ENCODE measurements at regions of chr9 and their contacts with region 1.

Region 1: GRCh38 chr9:105244003-105244733 is at the start of gene SLC44A1:
- H3K4me3 Mint-ChIP-seq: peak within 1 kb of the TSS; percentile 99
- H3K27ac Mint-ChIP-seq: peak within 1 kb of the TSS; percentile 99
- H3K4me1 Mint-ChIP-seq: peaks cover 45% of the 10 kb centered on the region
- H3K27me3 Mint-ChIP-seq: peaks cover 2% of the 10 kb centered on the region

Region 2: GRCh38 chr9:105195259-105195658 is 48.9 kb before region 1 on chr9:
- intact Hi-C with region 1: loop called (anchors 1 kb)
- H3K4me3 Mint-ChIP-seq: peak overlapping the region; percentile 18
- H3K27ac Mint-ChIP-seq: peak overlapping the region; percentile 85
- H3K4me1 Mint-ChIP-seq: peaks cover 69% of the 10 kb centered on the region
- H3K27me3 Mint-ChIP-seq: no peaks in the 10 kb centered on the region

Region 3: GRCh38 chr9:105264380-105264779 is 20.2 kb after region 1 on chr9:
- intact Hi-C with region 1: no loop called
- H3K4me3 Mint-ChIP-seq: no peak overlapping the region
- H3K27ac Mint-ChIP-seq: peak overlapping the region; percentile 10
- H3K4me1 Mint-ChIP-seq: peaks cover 62% of the 10 kb centered on the region
- H3K27me3 Mint-ChIP-seq: no peaks in the 10 kb centered on the region

Region 4: GRCh38 chr9:105299190-105299854 is 55.2 kb after region 1 on chr9:
- intact Hi-C with region 1: loop called (anchors 1 kb)
- H3K4me3 Mint-ChIP-seq: no peak overlapping the region
- H3K27ac Mint-ChIP-seq: peak overlapping the region; percentile 74
- H3K4me1 Mint-ChIP-seq: peaks cover 80% of the 10 kb centered on the region
- H3K27me3 Mint-ChIP-seq: no peaks in the 10 kb centered on the region